ENCODE measurements at regions of chr10 and their contacts with region 1.

Region 1: GRCh38 chr10:32055813-32056600 is at the start of gene KIF5B:
- DNase-seq: peak; percentile 93 to 96
- ATAC-seq: peak; percentile 97
- H3K4me3 ChIP-seq: peak within 1 kb of the TSS; percentile 54 to 73
- H3K27ac ChIP-seq: peak within 1 kb of the TSS; percentile 83 to 88
- H3K4me1 ChIP-seq: no peaks in the 10 kb centered on the region
- H3K27me3 ChIP-seq: no peaks in the 10 kb centered on the region
- total RNA-seq, gene KIF5B: 111 to 191 TPM

Region 2: DNA sequence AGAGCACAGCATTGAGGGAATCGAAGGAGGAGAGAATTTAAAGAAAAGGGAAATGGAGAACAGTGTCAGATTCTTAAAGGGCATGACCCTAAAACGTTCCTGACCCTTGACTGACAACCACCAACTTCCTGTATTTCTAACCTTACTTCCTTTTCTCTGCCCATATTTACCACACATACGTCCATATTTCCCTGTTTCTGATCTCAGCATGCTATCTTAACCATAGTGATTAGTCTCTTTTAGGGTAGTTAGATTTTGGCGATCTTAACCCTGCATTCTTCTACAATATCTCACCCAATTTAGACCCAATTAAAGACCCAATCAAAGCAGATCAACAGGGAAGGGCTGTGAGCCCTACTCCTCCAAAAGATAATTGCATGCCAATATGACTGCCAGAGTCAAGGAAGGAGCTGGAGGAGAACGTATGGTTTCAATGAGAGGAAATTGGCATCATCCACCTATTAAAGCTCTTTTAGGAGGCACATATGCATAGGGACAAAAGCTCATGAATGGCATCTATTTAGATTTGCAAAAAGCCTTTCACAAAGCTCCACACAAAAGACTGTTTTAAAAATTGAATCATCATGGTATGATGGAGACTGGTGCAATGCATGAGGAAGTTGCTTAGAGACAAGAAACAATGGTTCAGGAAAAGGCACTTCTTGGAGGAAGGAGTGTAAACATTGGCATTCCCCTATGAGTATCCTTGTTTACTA is 78.4 kb before region 1 on chr10:
- intact Hi-C with region 1: no loop called
- DNase-seq: no peak
- ATAC-seq: no peak
- H3K4me3 ChIP-seq: no peak overlapping the region
- H3K27ac ChIP-seq: no peak overlapping the region
- H3K4me1 ChIP-seq: no peaks in the 10 kb centered on the region
- H3K27me3 ChIP-seq: no peaks in the 10 kb centered on the region

Region 3: DNA sequence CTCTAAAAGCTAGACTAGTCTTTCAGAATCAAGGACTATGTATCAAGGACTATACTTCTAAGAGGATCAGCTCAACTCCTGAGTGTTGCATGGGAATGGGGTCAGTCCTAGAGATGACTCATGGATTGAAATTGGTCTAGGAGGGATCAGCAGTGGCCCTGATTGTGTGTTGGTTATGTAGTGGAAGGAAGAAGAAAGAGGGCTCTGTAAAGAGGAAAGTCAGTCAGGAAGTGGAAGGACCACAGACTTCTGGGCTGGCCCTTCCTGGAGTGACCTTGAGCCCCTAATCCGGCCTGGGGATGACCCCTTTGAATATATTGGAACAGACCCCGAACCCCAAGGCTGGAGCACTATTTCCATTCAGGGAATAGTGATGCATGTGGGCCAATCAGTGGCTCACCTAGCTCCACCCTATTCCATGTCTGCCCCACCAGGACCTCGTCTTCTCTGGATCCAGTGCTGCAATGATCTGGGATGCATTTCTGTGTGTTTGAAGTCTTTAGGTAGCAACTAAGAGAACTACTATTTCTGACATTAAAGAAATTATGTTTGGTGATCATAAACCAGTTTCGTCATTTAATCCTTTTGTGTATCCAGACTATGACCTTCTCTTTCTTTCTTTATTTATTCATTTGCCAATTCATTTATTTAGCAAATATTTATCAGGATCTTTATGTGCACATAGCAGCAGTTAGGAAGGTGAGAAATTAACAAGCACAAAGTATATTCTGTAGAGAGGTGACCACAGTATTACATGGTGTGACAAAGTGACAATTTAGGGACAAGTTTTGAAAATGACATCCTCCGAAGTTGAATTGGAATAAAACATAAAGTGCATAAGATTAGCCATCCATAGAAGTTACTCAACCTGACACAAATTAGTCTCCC is 48.9 kb after region 1 on chr10:
- intact Hi-C with region 1: loop called (anchors 5 to 10 kb)
- DNase-seq: no peak
- ATAC-seq: no peak
- H3K4me3 ChIP-seq: no peak overlapping the region
- H3K27ac ChIP-seq: peak overlapping the region in 1 of 2 donors; percentile 17
- H3K4me1 ChIP-seq: peaks cover 0 to 3% of the 10 kb centered on the region in 2 donors
- H3K27me3 ChIP-seq: no peaks in the 10 kb centered on the region

Region 4: GRCh38 chr10:32112055-32112454 is 56.0 kb after region 1 on chr10:
- intact Hi-C with region 1: loop called (anchors 5 to 10 kb)
- DNase-seq: no peak
- ATAC-seq: peak; percentile 80
- H3K4me3 ChIP-seq: no peak overlapping the region
- H3K27ac ChIP-seq: no peak overlapping the region
- H3K4me1 ChIP-seq: peaks cover 0 to 8% of the 10 kb centered on the region in 2 donors
- H3K27me3 ChIP-seq: no peaks in the 10 kb centered on the region

Region 5: GRCh38 chr10:32149252-32149955 is 93.4 kb after region 1 on chr10:
- intact Hi-C with region 1: loop called (anchors 5 kb)
- DNase-seq: peak; percentile 79 to 87
- ATAC-seq: peak; percentile 88
- H3K4me3 ChIP-seq: no peak overlapping the region
- H3K27ac ChIP-seq: peak overlapping the region; percentile 87 to 96
- H3K4me1 ChIP-seq: peaks cover 0 to 1% of the 10 kb centered on the region in 2 donors
- H3K27me3 ChIP-seq: no peaks in the 10 kb centered on the region

Region 6: DNA sequence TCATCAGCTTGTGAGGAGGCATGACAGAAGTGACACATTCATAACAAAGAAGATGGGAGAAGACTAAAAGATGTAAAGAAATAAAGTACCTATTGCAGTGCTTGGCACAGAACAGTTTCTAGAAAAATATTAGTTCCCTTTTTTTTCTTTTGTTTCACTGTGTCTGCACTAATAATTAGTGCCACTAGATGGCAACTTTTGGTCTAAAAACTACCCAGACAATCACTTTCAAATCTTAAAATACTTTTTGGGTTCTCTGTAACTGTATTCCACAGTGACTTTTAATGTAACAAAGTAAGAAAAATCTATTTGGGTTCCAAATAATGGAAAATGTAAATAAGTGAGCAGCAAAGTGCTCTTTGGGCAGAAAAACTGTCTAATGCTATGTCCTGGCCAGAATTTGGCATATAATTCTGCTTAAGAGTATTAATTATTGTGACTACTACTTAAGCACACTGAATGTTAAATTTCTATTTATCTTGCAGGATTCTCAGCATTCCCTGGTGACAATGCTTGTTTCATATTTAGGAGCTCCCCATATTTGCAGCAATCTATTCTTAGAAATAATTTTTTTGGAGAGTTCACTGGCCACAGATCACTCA is 135.0 kb after region 1 on chr10:
- intact Hi-C with region 1: loop called in 1 of 2 experiments (anchors 5 kb)
- DNase-seq: no peak
- ATAC-seq: peak; percentile 71
- H3K4me3 ChIP-seq: no peak overlapping the region
- H3K27ac ChIP-seq: no peak overlapping the region
- H3K4me1 ChIP-seq: no peaks in the 10 kb centered on the region
- H3K27me3 ChIP-seq: no peaks in the 10 kb centered on the region

Region 7: GRCh38 chr10:32346134-32346550 is 290.1 kb after region 1 on chr10:
- intact Hi-C with region 1: loop called in 1 of 2 experiments (anchors 5 kb)
- DNase-seq: peak; percentile 97 to 98
- ATAC-seq: peak; percentile 99
- H3K4me3 ChIP-seq: peak overlapping the region; percentile 76 to 90
- H3K27ac ChIP-seq: peak overlapping the region; percentile 89 to 99
- H3K4me1 ChIP-seq: no peaks in the 10 kb centered on the region
- H3K27me3 ChIP-seq: no peaks in the 10 kb centered on the region

Region 8: GRCh38 chr10:32367793-32368453 is 311.9 kb after region 1 on chr10:
- intact Hi-C with region 1: no loop called
- DNase-seq: peak; percentile 76 to 79
- ATAC-seq: peak; percentile 79
- H3K4me3 ChIP-seq: no peak overlapping the region
- H3K27ac ChIP-seq: no peak overlapping the region
- H3K4me1 ChIP-seq: peaks cover 0 to 3% of the 10 kb centered on the region in 2 donors
- H3K27me3 ChIP-seq: no peaks in the 10 kb centered on the region

Measured in aorta (tissue), 5 donors.